ENCODE measurements at regions of chr2 and their contacts with region 1.

Region 1: GRCh38 chr2:66541646-66542045 is 106.7 kb downstream of the MEIS1 start:
- DNase-seq: peak in 5 of 10 donors; percentile 20 to 74 (median 57)
- H3K4me3 ChIP-seq: peak overlapping the region in 29 of 59 donors; percentile 1 to 50 (median 17)
- H3K27ac ChIP-seq: peak overlapping the region; percentile 8 to 95 (median 86)
- H3K27me3 ChIP-seq: no peaks in the 10 kb centered on the region
- CTCF ChIP-seq: peak in 2 of 56 donors; percentile 4 to 20

Region 2: GRCh38 chr2:66423391-66424124 is 118.1 kb before region 1 on chr2:
- intact Hi-C with region 1: no loop called
- DNase-seq: no peak
- H3K4me3 ChIP-seq: no peak overlapping the region
- H3K27ac ChIP-seq: no peak overlapping the region
- H3K27me3 ChIP-seq: peaks cover 0 to 84% (median 50%) of the 10 kb centered on the region in 45 donors
- CTCF ChIP-seq: no peak

Region 3: DNA sequence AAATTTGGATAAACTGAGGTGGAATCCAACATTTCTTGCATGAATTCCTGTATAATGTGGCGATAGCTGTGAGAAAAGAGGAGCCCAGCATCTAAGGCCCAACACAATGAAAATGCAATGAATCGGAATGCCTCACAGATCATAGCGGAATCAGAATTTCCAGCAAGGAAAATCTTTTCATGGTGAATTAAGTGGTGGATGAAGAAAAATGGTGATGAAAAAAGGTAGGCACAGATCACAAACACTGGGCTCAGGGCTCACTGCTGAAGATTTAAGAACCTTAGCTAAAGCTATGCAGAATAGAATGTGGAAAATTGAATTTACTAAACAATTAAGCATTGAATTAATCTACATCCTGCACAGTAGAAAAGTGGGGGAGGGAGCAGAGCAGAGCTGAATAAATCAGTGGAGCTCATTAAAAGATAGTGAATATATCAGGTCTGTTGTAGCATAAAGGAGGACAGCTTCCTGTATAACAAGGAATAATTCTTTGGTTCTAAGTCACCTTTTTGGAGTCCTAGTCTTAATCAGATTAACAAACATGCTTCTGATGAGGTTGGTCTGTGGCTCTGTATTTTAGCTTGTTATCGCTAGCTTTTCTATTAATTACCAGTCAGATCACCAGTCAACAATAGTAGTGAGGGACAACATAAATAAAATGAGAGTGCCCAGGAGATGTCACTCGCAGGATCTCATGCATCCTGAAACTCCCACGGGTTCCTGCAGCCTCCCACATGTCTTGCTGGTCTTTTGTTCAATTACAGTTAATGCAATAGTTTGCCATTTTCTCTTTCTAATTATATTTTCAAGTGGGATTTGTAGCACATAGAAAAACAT is 79.8 kb before region 1 on chr2:
- intact Hi-C with region 1: loop called in 1 of 2 experiments (anchors 5 kb)
- DNase-seq: no peak
- H3K4me3 ChIP-seq: peak overlapping the region in 37 of 59 donors; percentile 1 to 48 (median 20)
- H3K27ac ChIP-seq: peak overlapping the region in 58 of 59 donors; percentile 8 to 93 (median 80)
- H3K27me3 ChIP-seq: no peaks in the 10 kb centered on the region
- CTCF ChIP-seq: peak in 5 of 56 donors; percentile 4 to 14 (median 12)

Region 4: GRCh38 chr2:66501267-66501666 is 40.4 kb before region 1 on chr2:
- intact Hi-C with region 1: loop called in 1 of 2 experiments (anchors 5 kb)
- DNase-seq: no peak
- H3K4me3 ChIP-seq: no peak overlapping the region
- H3K27ac ChIP-seq: no peak overlapping the region
- H3K27me3 ChIP-seq: no peaks in the 10 kb centered on the region
- CTCF ChIP-seq: no peak

Region 5: DNA sequence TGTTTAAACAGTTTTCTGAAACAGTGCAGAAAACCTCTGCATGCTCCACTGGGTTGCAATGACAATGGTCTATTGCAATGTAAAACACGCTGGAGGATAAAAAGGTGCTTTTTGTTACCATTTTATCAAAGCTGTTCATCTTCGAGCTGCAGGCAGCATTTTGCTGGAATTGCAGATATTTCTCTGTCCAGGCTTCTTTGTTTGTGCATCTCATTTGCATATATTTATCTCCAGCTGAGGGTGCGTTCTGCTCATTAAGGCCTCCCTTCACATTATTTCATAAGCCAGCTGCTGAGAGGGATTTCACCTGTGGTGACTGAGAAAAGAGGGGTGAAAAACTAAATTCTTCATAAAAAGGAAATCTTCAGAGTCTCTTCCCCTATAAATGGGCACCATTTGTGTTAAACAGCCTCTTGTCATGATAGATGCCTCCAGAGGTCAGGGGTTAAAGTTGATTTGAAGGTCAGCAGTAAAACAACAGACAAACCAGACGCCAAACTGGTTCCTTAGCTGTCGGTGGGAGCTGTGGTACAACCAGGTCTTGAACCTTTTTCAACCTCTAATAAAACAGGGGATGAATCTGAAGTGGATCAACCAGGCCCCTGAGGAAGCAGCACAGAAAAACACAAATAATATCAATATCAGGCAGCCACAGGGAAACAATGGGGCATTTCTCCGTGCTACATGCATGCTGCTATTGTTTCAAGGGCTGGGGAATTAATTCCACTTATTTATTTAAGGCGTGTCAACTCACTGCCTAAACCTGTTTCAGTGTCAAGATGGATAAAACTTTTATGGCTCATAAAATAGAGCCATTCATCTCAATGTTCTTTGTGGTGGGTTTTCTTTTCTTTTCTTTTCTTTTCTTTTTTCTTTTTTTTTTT is 158.4 kb after region 1 on chr2:
- intact Hi-C with region 1: no loop called
- DNase-seq: peak in 1 of 10 donors; percentile 26
- H3K4me3 ChIP-seq: peak overlapping the region in 4 of 59 donors; percentile 2 to 20 (median 19)
- H3K27ac ChIP-seq: peak overlapping the region in 52 of 59 donors; percentile 0 to 88 (median 60)
- H3K27me3 ChIP-seq: peaks cover 0 to 7% (median 0%) of the 10 kb centered on the region in 45 donors
- CTCF ChIP-seq: no peak

Region 6: DNA sequence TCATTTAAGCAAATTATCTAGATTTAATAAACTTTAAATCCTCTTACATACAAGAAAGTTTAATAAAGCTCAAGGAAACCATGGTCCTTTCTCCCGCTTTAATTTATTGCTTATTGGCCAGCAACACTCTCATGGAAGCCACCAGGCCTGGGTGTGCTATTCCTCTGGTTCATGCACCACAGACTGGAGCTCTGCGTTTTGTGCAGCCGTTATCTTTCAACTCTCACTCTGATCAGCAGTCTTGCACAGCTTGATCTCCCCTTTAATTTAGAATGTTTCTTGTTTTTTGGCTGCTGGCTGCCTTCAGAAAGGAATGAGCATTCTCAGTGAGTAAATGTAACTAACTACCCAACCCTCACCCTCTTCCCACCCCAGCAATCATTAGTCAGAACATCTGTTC is 212.0 kb after region 1 on chr2:
- intact Hi-C with region 1: no loop called
- DNase-seq: no peak
- H3K4me3 ChIP-seq: no peak overlapping the region
- H3K27ac ChIP-seq: no peak overlapping the region
- H3K27me3 ChIP-seq: no peaks in the 10 kb centered on the region
- CTCF ChIP-seq: no peak

Region 7: GRCh38 chr2:66869076-66869475 is 327.4 kb after region 1 on chr2:
- intact Hi-C with region 1: no loop called
- DNase-seq: no peak
- H3K4me3 ChIP-seq: no peak overlapping the region
- H3K27ac ChIP-seq: no peak overlapping the region
- H3K27me3 ChIP-seq: peaks cover 0 to 30% (median 3%) of the 10 kb centered on the region in 45 donors
- CTCF ChIP-seq: no peak

Measured in dorsolateral prefrontal cortex (tissue), 120 donors.